ENCODE measurements at regions of chr3 and their contacts with region 1.

Region 1: DNA sequence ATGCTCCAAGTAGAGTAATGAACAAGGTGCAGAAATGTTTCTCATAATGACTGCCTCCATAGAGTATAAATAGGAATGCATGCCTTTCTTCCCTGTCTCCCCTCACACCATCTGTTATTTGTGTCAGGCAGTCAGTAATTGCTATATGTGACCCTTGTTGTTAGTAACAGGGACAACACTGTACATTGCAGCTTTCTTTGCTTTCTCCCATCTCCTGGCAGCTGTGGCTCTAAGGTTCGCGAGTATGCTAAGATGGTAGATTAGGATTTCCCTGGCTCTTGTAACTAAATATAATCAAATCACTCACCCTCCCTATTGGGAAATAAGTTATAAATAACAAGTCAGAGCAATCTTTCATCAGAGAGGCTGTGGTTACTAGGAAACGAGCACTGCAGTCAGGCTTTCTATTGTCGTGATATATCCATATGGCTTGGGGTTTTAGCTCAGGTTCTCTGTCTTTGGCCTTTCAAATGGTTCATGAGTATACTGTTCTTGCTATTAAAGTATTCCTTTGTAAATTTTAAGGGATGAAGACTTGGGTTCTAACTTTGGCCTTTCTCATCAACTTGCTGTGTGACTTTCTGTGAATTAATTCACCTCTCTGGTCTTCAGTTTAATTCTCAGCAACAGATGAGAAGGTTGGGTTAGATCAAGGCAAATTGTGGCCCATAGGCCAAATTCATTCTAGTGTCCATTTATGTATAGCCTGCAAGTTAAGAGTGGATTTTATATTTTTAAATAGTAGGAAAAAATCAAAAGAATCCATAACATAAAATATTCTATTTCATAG is 8.1 kb upstream of the MINDY4B start:
- DNase-seq: no peak
- ATAC-seq: no peak
- H3K4me3 Mint-ChIP-seq: no peak overlapping the region
- H3K27ac Mint-ChIP-seq: no peak overlapping the region
- H3K4me1 Mint-ChIP-seq: peaks cover 9% of the 10 kb centered on the region
- H3K27me3 Mint-ChIP-seq: no peaks in the 10 kb centered on the region
- CTCF ChIP-seq: no peak

Region 2: DNA sequence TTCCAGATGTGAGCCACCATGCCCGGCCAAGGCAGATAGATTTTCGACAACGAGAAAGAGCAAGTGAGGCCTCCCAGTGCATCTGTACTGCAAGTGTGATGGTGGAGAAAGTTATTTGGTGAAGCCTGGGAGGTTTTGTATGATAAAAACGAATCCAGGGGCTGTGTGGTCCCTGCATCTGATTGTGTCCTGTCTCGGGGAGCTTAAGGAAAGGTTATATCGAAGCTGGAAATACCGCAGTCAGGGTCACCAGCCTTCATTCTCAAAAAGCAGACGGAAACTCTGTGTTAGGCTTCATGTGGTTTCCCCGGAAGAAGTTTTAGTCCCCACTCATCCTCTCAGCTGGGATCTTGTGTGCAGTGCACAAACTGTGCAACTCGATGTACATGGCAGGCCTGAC is 11.5 kb before region 1 on chr3:
- CTCF ChIA-PET with region 1: interaction called, 11 read pairs
- POLR2A ChIA-PET with region 1: no interaction called
- DNase-seq: no peak
- ATAC-seq: no peak
- H3K4me3 Mint-ChIP-seq: no peak overlapping the region
- H3K27ac Mint-ChIP-seq: no peak overlapping the region
- H3K4me1 Mint-ChIP-seq: peaks cover 6% of the 10 kb centered on the region
- H3K27me3 Mint-ChIP-seq: no peaks in the 10 kb centered on the region
- CTCF ChIP-seq: no peak